H1 (cell line): ENCODE measurements at regions of chr22 and their contacts with region 1.

Region 1: GRCh38 chr22:20618488-20618887 is 111.1 kb downstream of the MED15 start:
- DNase-seq: no peak
- H3K4me3 ChIP-seq: no peak overlapping the region
- H3K27ac ChIP-seq: no peak overlapping the region
- H3K4me1 ChIP-seq: no peaks in the 10 kb centered on the region
- H3K27me3 ChIP-seq: no peaks in the 10 kb centered on the region
- CTCF ChIP-seq: no peak
- EP300 ChIP-seq: no peak
- POLR2A ChIP-seq: no peak
- RAD21 ChIP-seq: no peak

Region 2: GRCh38 chr22:20630873-20631617 is 12.6 kb after region 1 on chr22:
- CTCF ChIA-PET with region 1: interaction called, 14 read pairs
- POLR2A ChIA-PET with region 1: no interaction called
- DNase-seq: no peak
- H3K4me3 ChIP-seq: no peak overlapping the region
- H3K27ac ChIP-seq: no peak overlapping the region
- H3K4me1 ChIP-seq: no peaks in the 10 kb centered on the region
- H3K27me3 ChIP-seq: no peaks in the 10 kb centered on the region
- CTCF ChIP-seq: no peak
- EP300 ChIP-seq: no peak
- POLR2A ChIP-seq: no peak
- RAD21 ChIP-seq: no peak